CD8-positive, alpha-beta memory T cell (primary cell): ENCODE measurements at regions of chr22 and their contacts with region 1.

Region 1: DNA sequence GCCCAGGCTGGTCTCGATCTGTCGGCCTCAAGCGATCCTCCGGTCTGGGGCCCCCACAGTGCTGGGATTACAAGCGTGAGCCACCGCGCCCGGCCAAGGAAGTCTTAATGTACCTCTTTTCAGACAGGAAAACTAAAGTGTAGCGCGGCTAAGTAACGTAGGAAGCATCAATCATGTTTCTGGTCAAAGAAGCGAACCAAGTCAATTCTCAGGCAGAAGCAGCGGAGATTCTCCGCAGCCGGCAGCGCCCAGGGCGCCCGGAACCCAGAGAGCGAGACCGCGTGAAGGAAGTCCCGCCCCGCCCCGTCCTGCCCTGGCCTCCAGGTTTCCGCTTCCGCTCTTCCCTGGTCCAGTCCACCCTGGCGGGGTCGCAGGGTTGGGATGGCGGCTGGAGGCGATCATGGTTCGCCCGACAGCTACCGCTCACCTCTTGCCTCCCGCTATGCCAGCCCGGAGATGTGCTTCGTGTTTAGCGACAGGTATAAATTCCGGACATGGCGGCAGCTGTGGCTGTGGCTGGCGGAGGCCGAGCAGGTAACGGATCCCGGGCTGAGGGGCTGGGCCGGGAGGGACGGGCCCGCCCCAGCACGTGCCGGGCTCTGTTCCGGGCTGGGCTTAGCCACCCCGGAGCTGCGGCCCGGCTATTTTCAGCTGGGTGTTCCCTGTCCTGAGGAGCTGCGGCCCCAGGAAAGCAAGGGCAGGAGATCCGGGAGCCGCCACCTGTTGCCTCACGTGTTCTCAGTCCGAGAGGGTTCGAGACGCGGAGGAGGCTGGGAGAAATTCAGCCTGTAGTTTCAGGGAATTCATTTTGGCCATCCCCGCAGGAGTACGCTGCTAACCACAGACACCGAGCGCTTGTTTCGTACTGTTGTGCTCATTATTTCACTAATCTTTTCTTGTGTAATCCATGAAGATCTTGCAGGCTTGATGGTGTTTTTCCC is at the start of gene ADSL:
- DNase-seq: peak; percentile 72 to 88 (median 81)
- H3K4me3 ChIP-seq: peak within 1 kb of the TSS; percentile 78
- H3K4me3 Mint-ChIP-seq: peak within 1 kb of the TSS; percentile 96 to 99 (median 98)
- H3K27ac ChIP-seq: peak within 1 kb of the TSS; percentile 83
- H3K27ac Mint-ChIP-seq: peak within 1 kb of the TSS; percentile 94 to 98 (median 97)
- H3K4me1 ChIP-seq: peaks cover 44% of the 10 kb centered on the region
- H3K4me1 Mint-ChIP-seq: peaks cover 53 to 69% (median 57%) of the 10 kb centered on the region in 3 donors
- H3K27me3 ChIP-seq: no peaks in the 10 kb centered on the region
- H3K27me3 Mint-ChIP-seq: no peaks in the 10 kb centered on the region
- total RNA-seq, gene ADSL: 151 to 154 TPM

Region 2: DNA sequence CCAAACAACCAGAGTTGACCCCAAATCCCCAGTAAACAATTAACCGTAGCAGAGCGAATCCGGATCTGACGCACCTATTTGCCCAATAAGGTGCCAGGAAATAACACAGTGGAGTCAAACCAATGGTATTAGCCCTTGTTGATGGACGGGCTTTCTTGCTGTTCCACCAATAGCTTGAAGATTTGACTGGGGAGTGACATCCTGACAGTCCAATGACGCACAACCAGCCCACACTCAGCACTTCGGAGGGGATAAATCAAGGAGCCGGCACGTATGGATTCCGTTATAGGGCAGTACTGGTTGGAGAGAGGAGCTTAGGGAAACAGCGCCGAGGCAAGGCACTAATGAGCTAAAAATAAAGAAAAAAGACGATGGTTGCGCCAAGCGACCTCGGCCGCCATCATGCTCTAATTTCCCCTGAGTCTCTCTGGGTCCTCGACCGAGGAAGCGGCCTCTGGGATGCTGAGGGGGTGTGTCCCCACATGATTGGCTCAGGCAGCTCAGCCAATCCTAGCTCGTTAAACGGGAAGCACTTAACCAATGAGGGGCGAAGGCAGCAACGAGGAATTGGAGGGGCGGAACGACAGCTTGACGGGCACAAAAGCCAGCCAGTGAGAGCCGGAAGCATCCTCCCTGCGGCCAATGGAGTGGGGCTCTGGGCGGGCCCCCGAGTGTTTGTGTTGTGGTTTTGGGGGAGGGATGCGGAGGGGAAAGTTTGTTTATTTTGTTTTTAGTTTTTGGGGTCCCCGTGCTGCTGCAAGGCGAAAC is 302.2 kb before region 1 on chr22:
- CTCF ChIA-PET with region 1: interaction called, 13 read pairs
- POLR2A ChIA-PET with region 1: interaction called, 51 read pairs
- DNase-seq: peak; percentile 95 to 99 (median 99)
- H3K4me3 ChIP-seq: peak overlapping the region; percentile 83
- H3K4me3 Mint-ChIP-seq: peak overlapping the region; percentile 91 to 99 (median 97)
- H3K27ac ChIP-seq: peak overlapping the region; percentile 97
- H3K27ac Mint-ChIP-seq: peak overlapping the region; percentile 98 to 100 (median 100)
- H3K4me1 ChIP-seq: peaks cover 41% of the 10 kb centered on the region
- H3K4me1 Mint-ChIP-seq: peaks cover 35 to 47% (median 47%) of the 10 kb centered on the region in 3 donors
- H3K27me3 ChIP-seq: no peaks in the 10 kb centered on the region
- H3K27me3 Mint-ChIP-seq: peaks cover 6 to 8% of the 10 kb centered on the region in 2 donors

Region 3: GRCh38 chr22:40247976-40248375 is 98.5 kb before region 1 on chr22:
- CTCF ChIA-PET with region 1: interaction called, 15 read pairs
- POLR2A ChIA-PET with region 1: interaction called, 4 read pairs
- DNase-seq: peak; percentile 52 to 87 (median 73)
- H3K4me3 ChIP-seq: no peak overlapping the region
- H3K4me3 Mint-ChIP-seq: peak overlapping the region; percentile 48 to 89 (median 71)
- H3K27ac ChIP-seq: no peak overlapping the region
- H3K27ac Mint-ChIP-seq: peak overlapping the region; percentile 16 to 94 (median 86)
- H3K4me1 ChIP-seq: peaks cover 60% of the 10 kb centered on the region
- H3K4me1 Mint-ChIP-seq: peaks cover 64 to 89% (median 83%) of the 10 kb centered on the region in 3 donors
- H3K27me3 ChIP-seq: no peaks in the 10 kb centered on the region
- H3K27me3 Mint-ChIP-seq: peaks cover 0 to 1% of the 10 kb centered on the region in 2 donors

Region 4: GRCh38 chr22:40289991-40290459 is 56.4 kb before region 1 on chr22:
- CTCF ChIA-PET with region 1: interaction called, 10 read pairs
- POLR2A ChIA-PET with region 1: interaction called, 5 read pairs
- DNase-seq: peak; percentile 49 to 81 (median 66)
- H3K4me3 ChIP-seq: peak overlapping the region; percentile 46
- H3K4me3 Mint-ChIP-seq: peak overlapping the region; percentile 13 to 87 (median 70)
- H3K27ac ChIP-seq: peak overlapping the region; percentile 60
- H3K27ac Mint-ChIP-seq: peak overlapping the region; percentile 91 to 99 (median 96)
- H3K4me1 ChIP-seq: peaks cover 42% of the 10 kb centered on the region
- H3K4me1 Mint-ChIP-seq: peaks cover 45 to 72% (median 69%) of the 10 kb centered on the region in 3 donors
- H3K27me3 ChIP-seq: no peaks in the 10 kb centered on the region
- H3K27me3 Mint-ChIP-seq: no peaks in the 10 kb centered on the region

Region 5: DNA sequence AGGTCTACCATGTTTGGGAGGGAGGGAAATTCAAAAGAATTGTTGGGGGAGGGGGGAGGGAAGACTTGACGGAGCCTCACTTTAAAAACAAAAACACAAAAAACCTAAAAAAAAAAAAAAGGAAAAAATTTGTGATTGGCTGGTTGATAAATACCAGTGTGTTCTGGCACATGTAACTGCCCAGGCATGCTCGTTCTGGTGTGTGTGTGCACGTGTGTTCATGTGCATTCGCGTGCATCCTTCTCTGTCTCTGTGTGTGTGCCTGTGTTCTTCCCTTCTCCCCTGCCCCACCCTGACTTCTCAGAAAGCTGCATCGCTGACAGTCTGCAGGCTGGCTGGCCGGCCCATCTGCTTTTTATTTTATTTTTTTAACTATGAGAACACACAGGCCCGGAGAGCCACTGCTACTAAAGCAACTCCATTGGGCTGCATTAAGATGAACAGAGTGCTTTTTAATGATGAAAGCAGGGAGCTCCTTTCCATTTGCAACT is 22.7 kb before region 1 on chr22:
- CTCF ChIA-PET with region 1: interaction called, 16 read pairs
- POLR2A ChIA-PET with region 1: interaction called, 6 read pairs
- DNase-seq: peak in 1 of 5 donors; percentile 49
- H3K4me3 ChIP-seq: peak overlapping the region; percentile 49
- H3K4me3 Mint-ChIP-seq: peak overlapping the region; percentile 46 to 84 (median 80)
- H3K27ac ChIP-seq: peak overlapping the region; percentile 58
- H3K27ac Mint-ChIP-seq: peak overlapping the region; percentile 83 to 98 (median 96)
- H3K4me1 ChIP-seq: peaks cover 69% of the 10 kb centered on the region
- H3K4me1 Mint-ChIP-seq: peaks cover 58 to 87% (median 70%) of the 10 kb centered on the region in 3 donors
- H3K27me3 ChIP-seq: no peaks in the 10 kb centered on the region
- H3K27me3 Mint-ChIP-seq: no peaks in the 10 kb centered on the region

Region 6: GRCh38 chr22:40334899-40335298 is 11.5 kb before region 1 on chr22:
- CTCF ChIA-PET with region 1: interaction called, 17 read pairs
- POLR2A ChIA-PET with region 1: interaction called, 25 read pairs
- DNase-seq: peak in 2 of 5 donors; percentile 64 to 72
- H3K4me3 ChIP-seq: no peak overlapping the region
- H3K4me3 Mint-ChIP-seq: peak overlapping the region; percentile 49 to 81 (median 67)
- H3K27ac ChIP-seq: no peak overlapping the region
- H3K27ac Mint-ChIP-seq: peak overlapping the region; percentile 31 to 86 (median 74)
- H3K4me1 ChIP-seq: peaks cover 72% of the 10 kb centered on the region
- H3K4me1 Mint-ChIP-seq: peaks cover 74 to 96% (median 95%) of the 10 kb centered on the region in 3 donors
- H3K27me3 ChIP-seq: no peaks in the 10 kb centered on the region
- H3K27me3 Mint-ChIP-seq: no peaks in the 10 kb centered on the region

Region 7: GRCh38 chr22:40469181-40469580 is 122.7 kb after region 1 on chr22:
- CTCF ChIA-PET with region 1: no interaction called
- POLR2A ChIA-PET with region 1: no interaction called
- DNase-seq: no peak
- H3K4me3 ChIP-seq: no peak overlapping the region
- H3K4me3 Mint-ChIP-seq: no peak overlapping the region
- H3K27ac ChIP-seq: no peak overlapping the region
- H3K27ac Mint-ChIP-seq: peak overlapping the region in 3 of 8 donors; percentile 13 to 33 (median 31)
- H3K4me1 ChIP-seq: peaks cover 6% of the 10 kb centered on the region
- H3K4me1 Mint-ChIP-seq: peaks cover 8 to 23% (median 13%) of the 10 kb centered on the region in 3 donors
- H3K27me3 ChIP-seq: no peaks in the 10 kb centered on the region
- H3K27me3 Mint-ChIP-seq: no peaks in the 10 kb centered on the region